PC-9 (cell line): ENCODE measurements at regions of chr5 and their contacts with region 1.

Region 1: DNA sequence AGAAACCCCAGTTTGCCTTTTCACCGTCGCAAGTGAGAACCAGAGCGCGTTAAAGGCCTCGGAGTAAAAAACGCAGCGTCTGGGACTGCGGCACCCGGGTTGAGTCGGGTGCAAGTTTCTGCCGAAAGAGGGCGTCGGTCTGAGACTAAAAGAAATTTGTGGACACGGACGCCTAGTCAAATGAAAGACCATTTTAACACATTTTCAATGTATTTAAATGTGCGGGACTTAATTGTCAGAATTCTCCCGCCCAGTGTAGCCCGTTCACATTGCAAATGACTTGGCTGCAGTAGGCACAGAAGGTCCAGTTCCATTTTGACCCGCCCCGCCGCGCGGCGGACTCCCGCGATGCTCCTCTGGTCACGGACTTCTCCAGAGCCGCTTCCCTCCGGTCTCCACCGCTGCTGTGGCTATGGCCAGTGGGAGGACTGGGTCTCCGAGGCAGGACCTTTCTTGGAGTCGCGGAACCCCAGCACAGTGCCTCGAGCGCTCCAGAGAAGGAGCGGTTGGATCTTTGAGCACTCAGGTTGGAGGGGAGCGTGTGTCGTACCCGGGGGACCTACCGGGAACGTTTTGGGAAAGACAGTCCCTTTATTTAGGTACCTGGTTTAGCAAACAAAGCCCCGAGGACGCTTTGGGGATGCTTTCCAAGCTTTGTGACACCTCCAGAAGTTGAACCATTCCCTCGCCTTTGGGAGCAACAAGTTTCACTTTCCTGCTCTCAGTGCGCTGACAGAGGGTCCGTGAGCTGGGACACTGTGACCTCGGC is 1.2 kb upstream of the NPR3 start:
- DNase-seq: peak; percentile 45 to 82
- H3K4me3 ChIP-seq: peak overlapping the region; percentile 72
- H3K27ac ChIP-seq: no peak overlapping the region
- H3K4me1 ChIP-seq: peaks cover 19% of the 10 kb centered on the region; the same call in 1 of the 2 replicates
- H3K27me3 ChIP-seq: peaks cover 18% of the 10 kb centered on the region
- CTCF ChIP-seq: peak; percentile 80

Region 2: GRCh38 chr5:31561946-31562345 is 1148.0 kb before region 1 on chr5:
- CTCF ChIA-PET with region 1: interaction called, 13 read pairs
- POLR2A ChIA-PET with region 1: no interaction called
- intact Hi-C with region 1: no loop called
- DNase-seq: no peak
- H3K4me3 ChIP-seq: no peak overlapping the region
- H3K27ac ChIP-seq: no peak overlapping the region
- H3K4me1 ChIP-seq: no peaks in the 10 kb centered on the region
- H3K27me3 ChIP-seq: no peaks in the 10 kb centered on the region
- CTCF ChIP-seq: no peak

Region 3: GRCh38 chr5:31585895-31586270 is 1124.1 kb before region 1 on chr5:
- CTCF ChIA-PET with region 1: no interaction called
- POLR2A ChIA-PET with region 1: no interaction called
- intact Hi-C with region 1: no loop called
- DNase-seq: no peak
- H3K4me3 ChIP-seq: no peak overlapping the region
- H3K27ac ChIP-seq: no peak overlapping the region
- H3K4me1 ChIP-seq: no peaks in the 10 kb centered on the region
- H3K27me3 ChIP-seq: peaks cover 81% of the 10 kb centered on the region
- CTCF ChIP-seq: no peak

Region 4: DNA sequence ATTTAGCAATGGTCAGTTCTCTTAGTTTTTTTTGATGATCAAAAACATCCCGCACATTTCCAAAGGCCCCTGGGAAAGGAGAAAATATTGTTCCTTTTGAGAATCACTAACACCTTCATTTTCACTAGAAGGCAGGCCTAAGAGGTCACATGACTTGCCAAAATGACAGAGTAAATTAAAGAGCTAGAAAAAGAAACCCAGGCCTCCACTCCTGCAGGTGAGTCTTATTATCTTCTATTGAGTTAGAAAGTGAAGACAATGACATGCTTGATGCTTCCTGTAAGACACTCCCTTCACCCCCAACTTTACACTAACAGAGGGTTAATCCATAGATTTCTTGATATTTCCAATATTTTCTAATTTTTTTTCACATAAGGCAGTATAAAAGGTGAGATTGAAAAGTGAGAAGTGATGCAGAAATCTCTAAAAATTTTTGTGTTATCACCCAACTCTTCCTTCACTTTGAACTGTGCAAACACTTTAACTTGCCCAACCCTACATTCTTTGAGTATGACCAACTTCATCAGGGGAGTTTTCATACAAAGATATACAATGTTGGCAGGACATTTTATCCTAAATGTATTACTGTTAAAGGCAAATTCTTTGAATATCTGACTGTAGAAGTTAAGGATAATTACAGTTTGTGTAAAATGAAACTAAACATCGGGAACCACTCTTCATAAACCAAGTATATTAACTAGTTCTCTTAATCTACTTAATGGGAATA is 67.5 kb before region 1 on chr5:
- CTCF ChIA-PET with region 1: interaction called, 3 read pairs
- POLR2A ChIA-PET with region 1: no interaction called
- intact Hi-C with region 1: loop called (anchors 2 kb)
- DNase-seq: peak in 1 of 2 experiments; percentile 79
- H3K4me3 ChIP-seq: peak overlapping the region; percentile 28
- H3K27ac ChIP-seq: peak overlapping the region; percentile 39
- H3K4me1 ChIP-seq: peaks cover 22% of the 10 kb centered on the region
- H3K27me3 ChIP-seq: no peaks in the 10 kb centered on the region
- CTCF ChIP-seq: no peak

Region 5: GRCh38 chr5:32760091-32760509 is 50.1 kb after region 1 on chr5:
- CTCF ChIA-PET with region 1: no interaction called
- POLR2A ChIA-PET with region 1: no interaction called
- intact Hi-C with region 1: no loop called
- DNase-seq: peak; percentile 38 to 73
- H3K4me3 ChIP-seq: peak overlapping the region; percentile 23; the same call in 1 of the 2 replicates
- H3K27ac ChIP-seq: peak overlapping the region; percentile 53
- H3K4me1 ChIP-seq: peaks cover 17% of the 10 kb centered on the region
- H3K27me3 ChIP-seq: no peaks in the 10 kb centered on the region
- CTCF ChIP-seq: no peak

Region 6: DNA sequence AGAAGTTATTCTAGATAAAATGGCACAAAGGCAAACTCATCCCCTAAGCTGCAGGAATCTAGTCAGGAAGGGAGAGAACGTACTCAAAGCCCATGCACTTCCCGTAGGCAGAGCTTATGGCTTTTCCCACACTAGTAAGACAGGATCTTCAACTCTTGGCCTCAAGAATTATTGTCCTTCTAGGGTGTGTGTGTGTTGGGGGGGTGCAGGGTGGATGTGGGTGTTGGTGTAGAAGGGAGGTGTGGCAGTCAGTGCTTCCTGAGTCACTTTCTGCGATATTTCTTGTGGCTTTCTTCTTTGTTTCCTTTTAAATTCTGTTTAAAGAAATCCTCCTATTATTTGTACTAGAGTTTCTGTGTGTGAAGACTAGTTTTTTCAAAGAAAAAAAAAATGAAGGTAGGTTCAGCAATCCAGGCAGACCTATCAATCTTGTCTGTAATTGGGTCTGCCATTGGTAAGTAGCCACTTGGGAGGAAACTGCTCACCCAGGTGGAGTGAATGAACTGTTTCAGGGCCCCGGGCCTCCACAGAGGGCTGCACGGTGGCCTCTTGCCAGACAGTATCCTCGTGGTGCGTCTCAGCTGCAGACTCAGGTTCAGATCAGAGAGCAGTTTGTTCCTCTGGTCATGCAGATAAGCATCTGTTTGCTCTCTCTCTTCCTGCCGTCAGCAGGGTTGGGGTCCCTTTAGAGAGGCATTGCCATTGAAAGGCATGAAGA is 133.0 kb after region 1 on chr5:
- CTCF ChIA-PET with region 1: interaction called, 5 read pairs
- POLR2A ChIA-PET with region 1: interaction called, 3 read pairs
- intact Hi-C with region 1: loop called (anchors 1 kb)
- DNase-seq: peak; percentile 58 to 92
- H3K4me3 ChIP-seq: no peak overlapping the region
- H3K27ac ChIP-seq: peak overlapping the region; percentile 6; the same call in 1 of the 2 replicates
- H3K4me1 ChIP-seq: peaks cover 16% of the 10 kb centered on the region
- H3K27me3 ChIP-seq: peaks cover 25% of the 10 kb centered on the region
- CTCF ChIP-seq: no peak

Region 7: GRCh38 chr5:32942225-32942989 is 232.4 kb after region 1 on chr5:
- CTCF ChIA-PET with region 1: interaction called, 14 read pairs
- POLR2A ChIA-PET with region 1: no interaction called
- intact Hi-C with region 1: no loop called
- DNase-seq: no peak
- H3K4me3 ChIP-seq: no peak overlapping the region
- H3K27ac ChIP-seq: no peak overlapping the region
- H3K4me1 ChIP-seq: no peaks in the 10 kb centered on the region
- H3K27me3 ChIP-seq: no peaks in the 10 kb centered on the region
- CTCF ChIP-seq: peak; percentile 80

Region 8: GRCh38 chr5:33180900-33181299 is 470.9 kb after region 1 on chr5:
- CTCF ChIA-PET with region 1: interaction called, 21 read pairs
- POLR2A ChIA-PET with region 1: no interaction called
- intact Hi-C with region 1: loop called (anchors 1 kb)
- DNase-seq: peak in 1 of 2 experiments; percentile 29
- H3K4me3 ChIP-seq: no peak overlapping the region
- H3K27ac ChIP-seq: no peak overlapping the region
- H3K4me1 ChIP-seq: no peaks in the 10 kb centered on the region
- H3K27me3 ChIP-seq: no peaks in the 10 kb centered on the region
- CTCF ChIP-seq: peak; percentile 79

Region 9: GRCh38 chr5:33313150-33313549 is 603.2 kb after region 1 on chr5:
- CTCF ChIA-PET with region 1: interaction called, 15 read pairs
- POLR2A ChIA-PET with region 1: no interaction called
- intact Hi-C with region 1: no loop called
- DNase-seq: peak; percentile 73 to 81
- H3K4me3 ChIP-seq: no peak overlapping the region
- H3K27ac ChIP-seq: peak overlapping the region; percentile 17; the same call in 1 of the 2 replicates
- H3K4me1 ChIP-seq: peaks cover 11% of the 10 kb centered on the region
- H3K27me3 ChIP-seq: no peaks in the 10 kb centered on the region
- CTCF ChIP-seq: no peak